Naive thymus-derived CD4-positive, alpha-beta T cell (primary cell): ENCODE measurements at regions of chr21 and their contacts with region 1.

Region 1: GRCh38 chr21:17679002-17679600 is 66.4 kb upstream of the BTG3 start:
- DNase-seq: peak in 7 of 9 donors; percentile 50 to 76 (median 60)
- ATAC-seq: peak; percentile 96
- H3K4me3 ChIP-seq: no peak overlapping the region
- H3K4me3 Mint-ChIP-seq: no peak overlapping the region
- H3K27ac ChIP-seq: no peak overlapping the region
- H3K27ac Mint-ChIP-seq: no peak overlapping the region
- H3K4me1 ChIP-seq: no peaks in the 10 kb centered on the region
- H3K4me1 Mint-ChIP-seq: no peaks in the 10 kb centered on the region
- H3K27me3 ChIP-seq: no peaks in the 10 kb centered on the region
- H3K27me3 Mint-ChIP-seq: peaks cover 0 to 4% (median 0%) of the 10 kb centered on the region in 5 donors

Region 2: DNA sequence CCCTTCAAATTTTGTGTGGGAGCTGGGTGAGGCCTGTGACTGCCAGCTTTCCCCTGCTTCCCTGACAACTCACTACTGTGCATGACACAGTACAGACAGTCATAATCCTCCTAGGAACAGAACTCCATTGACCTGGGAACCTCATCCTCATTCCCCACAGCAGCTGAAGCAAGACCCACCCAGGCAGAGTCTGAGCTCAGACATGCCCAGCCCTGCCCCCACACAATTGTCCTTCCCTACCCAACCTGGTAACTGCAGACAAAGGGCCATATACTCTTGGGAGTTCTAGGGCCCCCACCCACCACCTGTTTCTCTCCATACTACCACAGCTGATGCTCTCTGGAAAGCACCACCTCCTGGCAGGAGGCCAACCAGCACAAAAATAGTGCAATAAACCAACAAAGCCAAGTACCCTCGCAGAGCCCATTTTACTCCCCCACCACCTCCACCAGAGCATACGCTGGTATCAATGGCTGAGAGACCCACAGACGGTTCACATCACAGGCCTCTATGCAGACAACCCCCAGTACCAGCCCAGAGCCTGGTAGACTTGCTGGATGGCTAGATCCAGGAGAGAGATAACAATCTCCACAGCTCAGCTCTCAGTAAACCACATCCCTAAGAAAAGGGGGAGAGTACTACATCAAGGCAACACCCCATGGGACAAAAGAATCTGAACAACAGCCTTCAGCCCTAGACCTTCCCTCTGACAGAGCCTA is 326.0 kb before region 1 on chr21:
- CTCF ChIA-PET with region 1: no interaction called
- POLR2A ChIA-PET with region 1: no interaction called
- intact Hi-C with region 1: no loop called
- DNase-seq: no peak
- ATAC-seq: no peak
- H3K4me3 ChIP-seq: no peak overlapping the region
- H3K4me3 Mint-ChIP-seq: no peak overlapping the region
- H3K27ac ChIP-seq: no peak overlapping the region
- H3K27ac Mint-ChIP-seq: no peak overlapping the region
- H3K4me1 ChIP-seq: no peaks in the 10 kb centered on the region
- H3K4me1 Mint-ChIP-seq: no peaks in the 10 kb centered on the region
- H3K27me3 ChIP-seq: no peaks in the 10 kb centered on the region
- H3K27me3 Mint-ChIP-seq: peaks cover 0 to 22% (median 15%) of the 10 kb centered on the region in 5 donors

Region 3: DNA sequence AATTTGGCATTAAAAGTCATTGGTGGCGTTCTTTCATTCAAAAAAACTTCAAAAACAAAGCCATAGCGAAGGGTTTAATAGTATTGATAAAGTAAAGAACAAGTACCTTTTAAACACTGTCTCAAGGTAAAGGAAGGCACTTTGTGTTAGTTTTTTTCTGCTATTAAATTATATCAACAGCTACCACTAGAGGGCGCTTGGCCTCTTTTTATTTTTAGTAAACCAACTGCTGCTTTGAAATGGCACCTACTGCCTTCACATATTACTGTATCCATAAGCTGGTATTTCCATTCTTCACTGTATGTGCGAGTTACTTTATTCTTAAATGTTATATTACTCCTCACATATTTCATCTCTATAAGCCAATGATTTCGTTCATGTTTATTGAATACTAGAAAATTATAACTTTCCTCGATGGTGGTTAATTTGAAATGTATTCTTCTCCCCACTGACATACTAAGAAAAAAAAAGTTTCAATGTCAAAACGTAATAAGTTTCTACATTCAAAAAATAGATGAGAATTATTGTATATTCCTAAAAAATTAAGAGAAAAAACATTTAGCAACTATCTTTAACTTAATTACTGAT is 292.0 kb before region 1 on chr21:
- CTCF ChIA-PET with region 1: no interaction called
- POLR2A ChIA-PET with region 1: no interaction called
- intact Hi-C with region 1: loop called in 1 of 2 experiments (anchors 2 kb)
- DNase-seq: peak in 7 of 9 donors; percentile 25 to 64 (median 56)
- ATAC-seq: peak; percentile 77
- H3K4me3 ChIP-seq: no peak overlapping the region
- H3K4me3 Mint-ChIP-seq: no peak overlapping the region
- H3K27ac ChIP-seq: no peak overlapping the region
- H3K27ac Mint-ChIP-seq: no peak overlapping the region
- H3K4me1 ChIP-seq: no peaks in the 10 kb centered on the region
- H3K4me1 Mint-ChIP-seq: peaks cover 0 to 4% (median 0%) of the 10 kb centered on the region in 7 donors
- H3K27me3 ChIP-seq: no peaks in the 10 kb centered on the region
- H3K27me3 Mint-ChIP-seq: peaks cover 0 to 4% (median 0%) of the 10 kb centered on the region in 5 donors

Region 4: GRCh38 chr21:17611414-17612022 is 67.6 kb before region 1 on chr21:
- CTCF ChIA-PET with region 1: no interaction called
- POLR2A ChIA-PET with region 1: no interaction called
- intact Hi-C with region 1: loop called in 1 of 2 experiments (anchors 2 kb)
- DNase-seq: peak; percentile 57 to 84 (median 73)
- ATAC-seq: peak; percentile 72
- H3K4me3 ChIP-seq: peak overlapping the region; percentile 83
- H3K4me3 Mint-ChIP-seq: peak overlapping the region; percentile 85 to 98 (median 90)
- H3K27ac ChIP-seq: peak overlapping the region; percentile 72
- H3K27ac Mint-ChIP-seq: peak overlapping the region; percentile 77 to 100 (median 93)
- H3K4me1 ChIP-seq: peaks cover 0 to 7% of the 10 kb centered on the region in 2 donors
- H3K4me1 Mint-ChIP-seq: peaks cover 7 to 65% (median 19%) of the 10 kb centered on the region in 7 donors
- H3K27me3 ChIP-seq: no peaks in the 10 kb centered on the region
- H3K27me3 Mint-ChIP-seq: no peaks in the 10 kb centered on the region

Region 5: GRCh38 chr21:17903029-17903806 is 224.1 kb after region 1 on chr21:
- CTCF ChIA-PET with region 1: interaction called, 39 read pairs
- POLR2A ChIA-PET with region 1: no interaction called
- intact Hi-C with region 1: loop called (anchors 1 kb)
- DNase-seq: peak in 7 of 9 donors; percentile 10 to 58 (median 37)
- ATAC-seq: peak; percentile 79
- H3K4me3 ChIP-seq: no peak overlapping the region
- H3K4me3 Mint-ChIP-seq: no peak overlapping the region
- H3K27ac ChIP-seq: no peak overlapping the region
- H3K27ac Mint-ChIP-seq: no peak overlapping the region
- H3K4me1 ChIP-seq: no peaks in the 10 kb centered on the region
- H3K4me1 Mint-ChIP-seq: peaks cover 0 to 12% (median 3%) of the 10 kb centered on the region in 7 donors
- H3K27me3 ChIP-seq: no peaks in the 10 kb centered on the region
- H3K27me3 Mint-ChIP-seq: peaks cover 0 to 5% (median 0%) of the 10 kb centered on the region in 5 donors

Region 6: GRCh38 chr21:17925000-17925610 is 246.0 kb after region 1 on chr21:
- CTCF ChIA-PET with region 1: interaction called, 14 read pairs
- POLR2A ChIA-PET with region 1: no interaction called
- intact Hi-C with region 1: loop called (anchors 1 kb)
- DNase-seq: peak in 8 of 9 donors; percentile 9 to 54 (median 36)
- ATAC-seq: peak; percentile 96
- H3K4me3 ChIP-seq: no peak overlapping the region
- H3K4me3 Mint-ChIP-seq: no peak overlapping the region
- H3K27ac ChIP-seq: no peak overlapping the region
- H3K27ac Mint-ChIP-seq: no peak overlapping the region
- H3K4me1 ChIP-seq: no peaks in the 10 kb centered on the region
- H3K4me1 Mint-ChIP-seq: peaks cover 0 to 3% (median 0%) of the 10 kb centered on the region in 7 donors
- H3K27me3 ChIP-seq: no peaks in the 10 kb centered on the region
- H3K27me3 Mint-ChIP-seq: peaks cover 0 to 17% (median 5%) of the 10 kb centered on the region in 5 donors

Region 7: DNA sequence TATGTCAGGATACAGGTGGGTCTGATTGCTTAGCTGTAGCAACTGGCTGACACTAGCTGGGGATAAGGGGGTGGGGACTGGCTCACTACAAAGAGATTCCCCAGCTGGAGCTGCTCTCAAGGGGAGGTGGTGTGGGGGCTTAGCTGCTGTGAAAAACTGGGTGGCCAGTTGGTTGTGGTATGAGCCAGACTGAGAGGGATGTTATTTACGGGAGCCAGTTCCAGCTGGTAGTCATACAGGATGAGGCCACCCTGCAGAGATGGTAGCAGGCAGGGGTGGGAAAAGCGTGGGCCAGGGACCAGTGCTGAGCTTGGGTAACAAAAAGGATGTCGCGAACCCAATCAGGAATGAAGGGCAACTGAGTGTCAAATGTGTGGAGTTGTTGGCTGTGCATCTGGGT is 344.1 kb after region 1 on chr21:
- CTCF ChIA-PET with region 1: no interaction called
- POLR2A ChIA-PET with region 1: no interaction called
- intact Hi-C with region 1: no loop called
- DNase-seq: no peak
- ATAC-seq: no peak
- H3K4me3 ChIP-seq: no peak overlapping the region
- H3K4me3 Mint-ChIP-seq: no peak overlapping the region
- H3K27ac ChIP-seq: no peak overlapping the region
- H3K27ac Mint-ChIP-seq: no peak overlapping the region
- H3K4me1 ChIP-seq: no peaks in the 10 kb centered on the region
- H3K4me1 Mint-ChIP-seq: no peaks in the 10 kb centered on the region
- H3K27me3 ChIP-seq: no peaks in the 10 kb centered on the region
- H3K27me3 Mint-ChIP-seq: peaks cover 0 to 8% (median 0%) of the 10 kb centered on the region in 5 donors

Region 8: DNA sequence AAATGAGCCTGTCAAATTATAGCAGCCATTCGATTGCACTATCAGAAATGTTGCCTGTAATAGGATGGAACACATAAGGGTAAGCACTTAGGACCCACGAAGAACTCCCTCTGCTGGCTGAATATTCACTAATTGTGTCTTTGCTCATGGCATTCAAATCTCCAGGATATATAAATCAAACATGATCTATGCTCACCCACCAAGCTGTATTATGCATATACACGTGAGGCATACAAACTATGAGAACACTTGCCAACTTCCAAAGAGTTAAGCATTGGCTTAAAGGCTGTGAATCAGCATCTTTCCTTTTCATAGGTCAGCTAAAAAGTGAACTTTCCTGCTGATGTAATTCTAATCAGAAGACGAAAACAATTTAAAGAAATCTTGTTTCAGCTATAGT is 690.0 kb after region 1 on chr21:
- CTCF ChIA-PET with region 1: no interaction called
- POLR2A ChIA-PET with region 1: no interaction called
- intact Hi-C with region 1: loop called in 1 of 2 experiments (anchors 5 kb)
- DNase-seq: no peak
- ATAC-seq: no peak
- H3K4me3 ChIP-seq: no peak overlapping the region
- H3K4me3 Mint-ChIP-seq: no peak overlapping the region
- H3K27ac ChIP-seq: no peak overlapping the region
- H3K27ac Mint-ChIP-seq: no peak overlapping the region
- H3K4me1 ChIP-seq: no peaks in the 10 kb centered on the region
- H3K4me1 Mint-ChIP-seq: no peaks in the 10 kb centered on the region
- H3K27me3 ChIP-seq: no peaks in the 10 kb centered on the region
- H3K27me3 Mint-ChIP-seq: no peaks in the 10 kb centered on the region